BJ (cell line): ENCODE measurements at regions of chr7 and their contacts with region 1.

Region 1: DNA sequence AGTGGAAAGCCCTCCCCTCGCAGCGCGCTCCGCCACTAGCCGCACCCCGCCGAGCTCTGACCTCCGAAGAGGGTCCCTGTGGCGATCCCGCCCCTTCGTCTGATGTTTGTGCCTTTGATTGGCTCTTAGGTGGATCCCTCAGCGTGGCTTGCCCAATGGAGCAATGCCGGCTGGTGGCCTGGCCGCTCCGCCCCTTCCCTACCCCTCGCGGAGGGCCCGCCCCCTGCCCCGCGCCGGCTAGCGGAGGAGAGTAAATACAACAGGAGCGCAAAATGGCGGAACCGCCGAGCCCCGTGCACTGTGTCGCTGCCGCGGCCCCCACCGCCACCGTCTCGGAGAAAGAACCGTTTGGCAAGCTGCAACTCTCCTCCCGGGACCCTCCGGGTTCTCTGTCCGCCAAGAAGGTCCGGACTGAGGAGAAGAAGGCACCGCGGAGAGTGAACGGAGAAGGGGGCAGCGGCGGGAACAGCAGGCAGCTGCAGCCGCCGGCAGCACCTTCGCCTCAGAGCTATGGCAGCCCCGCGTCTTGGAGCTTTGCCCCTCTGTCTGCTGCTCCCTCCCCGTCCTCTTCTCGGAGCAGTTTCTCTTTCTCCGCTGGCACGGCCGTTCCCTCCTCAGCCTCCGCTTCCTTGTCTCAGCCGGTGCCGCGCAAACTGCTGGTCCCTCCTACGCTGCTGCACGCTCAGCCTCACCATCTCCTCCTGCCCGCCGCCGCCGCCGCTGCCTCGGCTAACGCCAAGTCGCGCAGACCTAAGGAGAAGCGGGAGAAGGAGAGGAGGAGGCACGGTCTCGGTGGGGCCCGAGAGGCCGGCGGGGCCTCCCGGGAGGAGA is at the start of gene RSBN1L:
- DNase-seq: peak; percentile 80
- H3K4me3 ChIP-seq: peak within 1 kb of the TSS; percentile 98
- H3K27me3 ChIP-seq: no peaks in the 10 kb centered on the region
- CTCF ChIP-seq: peak; percentile 55
- polyA plus RNA-seq, gene RSBN1L: 2.8 and 4.8 TPM in 2 replicates

Region 2: GRCh38 chr7:77657427-77658224 is 38.8 kb before region 1 on chr7:
- CTCF ChIA-PET with region 1: interaction called, 10 read pairs
- POLR2A ChIA-PET with region 1: no interaction called
- DNase-seq: no peak
- H3K4me3 ChIP-seq: no peak overlapping the region
- H3K27me3 ChIP-seq: no peaks in the 10 kb centered on the region
- CTCF ChIP-seq: peak; percentile 37

Region 3: GRCh38 chr7:77684030-77684429 is 12.4 kb before region 1 on chr7:
- CTCF ChIA-PET with region 1: interaction called, 26 read pairs
- POLR2A ChIA-PET with region 1: interaction called, 4 read pairs
- DNase-seq: no peak
- H3K4me3 ChIP-seq: no peak overlapping the region
- H3K27me3 ChIP-seq: no peaks in the 10 kb centered on the region
- CTCF ChIP-seq: no peak